ENCODE measurements at regions of chr5 and their contacts with region 1.

Region 1: GRCh38 chr5:168219515-168220410 is 71.7 kb upstream of the WWC1 start:
- DNase-seq: peak; percentile 73
- ATAC-seq: peak; percentile 80
- H3K4me3 ChIP-seq: peak overlapping the region; percentile 1 to 40; a peak in 2 of 4 replicates
- H3K27ac ChIP-seq: peak overlapping the region; percentile 3; the same call in 1 of the 2 replicates
- H3K4me1 ChIP-seq: no peaks in the 10 kb centered on the region
- H3K27me3 ChIP-seq: peaks cover 8% of the 10 kb centered on the region
- CTCF ChIP-seq: peak; percentile 87

Region 2: DNA sequence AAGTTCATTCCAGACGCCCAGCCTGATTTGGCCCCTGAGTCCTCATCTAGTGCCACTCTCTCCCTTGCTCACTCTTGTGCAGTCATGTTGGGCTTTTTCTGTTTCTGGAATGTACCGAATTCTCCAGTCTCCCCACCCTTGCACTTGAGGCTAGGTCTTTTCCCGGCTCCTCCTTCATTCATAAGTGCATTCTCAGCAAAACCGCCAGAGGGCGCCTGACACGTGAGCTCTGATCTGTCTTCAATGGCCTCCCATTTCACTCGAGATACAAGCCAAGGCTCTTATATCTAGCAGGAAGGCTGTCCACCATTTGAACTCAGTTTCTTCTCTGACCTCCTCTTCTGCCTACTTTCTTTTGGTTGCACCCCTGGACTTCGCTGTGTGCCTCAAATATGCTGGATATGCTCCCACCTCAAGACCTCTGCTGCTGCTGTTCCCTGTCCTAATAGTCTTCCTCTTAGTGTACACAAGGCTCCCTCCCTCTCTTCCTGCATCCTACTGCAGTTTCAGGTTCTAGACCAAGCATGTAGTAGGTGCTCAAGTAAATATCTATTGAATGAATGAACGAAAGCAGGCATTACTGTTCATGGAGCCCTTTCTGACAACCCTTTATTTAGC is 496.4 kb before region 1 on chr5:
- CTCF ChIA-PET with region 1: interaction called, 13 read pairs
- POLR2A ChIA-PET with region 1: no interaction called
- in situ Hi-C with region 1: no loop called
- intact Hi-C with region 1: loop called (anchors 2 kb)
- DNase-seq: peak; percentile 57
- ATAC-seq: peak; percentile 96
- H3K4me3 ChIP-seq: no peak overlapping the region
- H3K27ac ChIP-seq: no peak overlapping the region
- H3K4me1 ChIP-seq: peaks cover 2% of the 10 kb centered on the region; the same call in 1 of the 2 replicates
- H3K27me3 ChIP-seq: no peaks in the 10 kb centered on the region
- CTCF ChIP-seq: peak; percentile 92

Region 3: DNA sequence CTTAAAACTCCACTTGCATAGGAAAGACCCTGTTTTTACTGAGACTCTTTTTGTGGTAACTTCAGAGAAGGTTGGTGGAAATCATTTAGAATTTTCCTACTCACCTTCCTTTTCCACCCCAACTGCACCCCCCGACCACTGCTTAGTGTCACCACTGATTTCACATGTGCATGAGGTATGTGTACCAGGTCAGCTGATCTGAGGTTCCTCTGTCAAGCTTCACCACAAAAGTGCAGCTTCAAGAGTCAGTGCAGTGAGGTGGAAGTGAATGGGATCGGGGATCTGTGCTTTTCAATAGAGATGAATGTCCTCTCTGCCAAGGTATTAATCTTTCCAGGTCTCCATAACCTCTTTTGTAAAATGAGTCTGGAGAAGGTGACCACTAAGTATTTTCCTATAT is 188.9 kb before region 1 on chr5:
- CTCF ChIA-PET with region 1: no interaction called
- POLR2A ChIA-PET with region 1: no interaction called
- in situ Hi-C with region 1: no loop called
- intact Hi-C with region 1: loop called (anchors 5 kb)
- DNase-seq: no peak
- ATAC-seq: no peak
- H3K4me3 ChIP-seq: no peak overlapping the region
- H3K27ac ChIP-seq: no peak overlapping the region
- H3K4me1 ChIP-seq: no peaks in the 10 kb centered on the region
- H3K27me3 ChIP-seq: peaks cover 4% of the 10 kb centered on the region; the same call in 1 of the 2 replicates
- CTCF ChIP-seq: no peak

Region 4: GRCh38 chr5:168114444-168115017 is 105.2 kb before region 1 on chr5:
- CTCF ChIA-PET with region 1: no interaction called
- POLR2A ChIA-PET with region 1: no interaction called
- in situ Hi-C with region 1: no loop called
- intact Hi-C with region 1: loop called (anchors 1 kb)
- DNase-seq: peak; percentile 47
- ATAC-seq: peak; percentile 85
- H3K4me3 ChIP-seq: no peak overlapping the region
- H3K27ac ChIP-seq: no peak overlapping the region
- H3K4me1 ChIP-seq: no peaks in the 10 kb centered on the region
- H3K27me3 ChIP-seq: peaks cover 3% of the 10 kb centered on the region; the same call in 1 of the 2 replicates
- CTCF ChIP-seq: peak; percentile 86

Region 5: DNA sequence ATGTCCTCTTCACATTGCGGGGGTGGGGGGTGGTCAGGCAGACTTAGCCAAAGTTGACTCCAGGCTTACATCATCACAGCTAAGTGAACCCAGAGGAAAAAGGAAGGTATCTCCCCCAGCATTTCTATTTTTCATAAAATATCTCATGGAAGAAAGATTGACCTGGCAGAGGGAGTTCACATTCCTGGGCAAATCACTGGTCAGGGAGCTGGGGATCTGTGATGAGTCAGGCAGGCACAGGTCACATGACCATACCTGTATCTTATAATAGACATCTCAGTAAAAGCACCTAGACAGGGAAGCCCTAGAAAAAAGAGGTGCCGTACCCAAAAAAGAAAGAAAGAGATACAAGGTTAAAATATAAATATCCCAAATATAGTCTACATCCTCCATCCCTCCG is 14.4 kb after region 1 on chr5:
- CTCF ChIA-PET with region 1: no interaction called
- POLR2A ChIA-PET with region 1: no interaction called
- in situ Hi-C with region 1: no loop called
- intact Hi-C with region 1: no loop called
- DNase-seq: no peak
- ATAC-seq: no peak
- H3K4me3 ChIP-seq: no peak overlapping the region
- H3K27ac ChIP-seq: no peak overlapping the region
- H3K4me1 ChIP-seq: no peaks in the 10 kb centered on the region
- H3K27me3 ChIP-seq: no peaks in the 10 kb centered on the region
- CTCF ChIP-seq: no peak